ENCODE measurements at regions of chr3 and their contacts with region 1.

Region 1: DNA sequence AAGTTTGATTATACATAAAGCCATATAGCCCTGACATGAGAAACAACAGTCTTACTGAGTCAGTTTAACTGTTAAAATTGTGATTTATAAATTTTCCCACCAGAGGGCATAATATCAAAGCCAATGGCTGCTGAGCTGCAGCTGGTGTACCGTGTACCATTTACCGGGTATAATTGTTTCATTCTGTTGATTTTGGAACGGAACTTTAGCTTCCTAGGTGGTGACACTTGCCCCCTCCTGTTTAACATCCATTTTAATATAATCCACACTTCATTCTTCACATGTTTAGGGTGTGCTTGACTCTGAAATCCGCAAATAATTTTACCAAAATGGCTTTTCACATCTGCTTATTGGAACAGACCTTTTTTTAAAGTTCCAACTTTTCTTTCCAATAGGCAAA is 72.8 kb downstream of the SLC9A9 start:
- DNase-seq: no peak
- H3K4me3 ChIP-seq: no peak overlapping the region
- H3K27ac ChIP-seq: no peak overlapping the region
- H3K4me1 ChIP-seq: no peaks in the 10 kb centered on the region
- H3K27me3 ChIP-seq: no peaks in the 10 kb centered on the region
- CTCF ChIP-seq: peak; percentile 72

Region 2: DNA sequence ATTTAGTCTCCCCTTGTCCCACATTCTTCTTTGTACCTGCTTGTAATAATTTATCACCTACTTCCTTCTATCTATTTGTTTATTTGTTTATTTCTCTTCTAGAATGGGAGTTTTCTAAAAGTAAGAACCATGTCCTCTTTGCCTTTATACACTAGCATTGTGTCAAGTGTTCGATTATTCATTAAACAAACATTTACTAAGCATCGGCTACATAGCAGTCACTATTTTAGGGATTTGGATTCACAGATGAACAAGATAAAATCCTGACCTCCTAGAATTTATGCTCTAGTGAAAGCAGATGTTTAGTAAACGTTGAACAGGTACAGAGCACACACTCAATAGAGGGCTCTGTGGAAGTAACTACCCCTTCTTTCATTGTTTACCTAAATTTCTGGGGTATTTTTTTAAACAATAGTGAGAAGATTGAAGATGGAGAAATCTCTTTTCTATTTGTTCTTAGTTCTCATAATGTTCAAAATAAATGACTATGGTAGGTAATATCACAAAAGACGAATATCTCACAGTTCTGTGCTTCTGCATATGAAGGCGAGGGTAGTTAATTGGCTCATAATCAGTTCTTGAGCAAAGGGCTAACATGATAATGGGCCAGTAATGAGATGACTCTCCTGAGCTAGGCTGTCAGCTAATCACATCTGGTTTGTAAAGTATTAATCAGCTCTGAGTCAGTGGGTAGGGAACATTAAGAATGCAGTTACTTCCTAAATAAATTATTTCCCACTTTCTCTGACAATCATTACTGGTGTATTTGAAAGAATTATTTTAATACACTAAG is 39.1 kb before region 1 on chr3:
- CTCF ChIA-PET with region 1: no interaction called
- POLR2A ChIA-PET with region 1: no interaction called
- intact Hi-C with region 1: no loop called
- DNase-seq: no peak
- H3K4me3 ChIP-seq: no peak overlapping the region
- H3K27ac ChIP-seq: no peak overlapping the region
- H3K4me1 ChIP-seq: no peaks in the 10 kb centered on the region
- H3K27me3 ChIP-seq: no peaks in the 10 kb centered on the region
- CTCF ChIP-seq: no peak

Region 3: DNA sequence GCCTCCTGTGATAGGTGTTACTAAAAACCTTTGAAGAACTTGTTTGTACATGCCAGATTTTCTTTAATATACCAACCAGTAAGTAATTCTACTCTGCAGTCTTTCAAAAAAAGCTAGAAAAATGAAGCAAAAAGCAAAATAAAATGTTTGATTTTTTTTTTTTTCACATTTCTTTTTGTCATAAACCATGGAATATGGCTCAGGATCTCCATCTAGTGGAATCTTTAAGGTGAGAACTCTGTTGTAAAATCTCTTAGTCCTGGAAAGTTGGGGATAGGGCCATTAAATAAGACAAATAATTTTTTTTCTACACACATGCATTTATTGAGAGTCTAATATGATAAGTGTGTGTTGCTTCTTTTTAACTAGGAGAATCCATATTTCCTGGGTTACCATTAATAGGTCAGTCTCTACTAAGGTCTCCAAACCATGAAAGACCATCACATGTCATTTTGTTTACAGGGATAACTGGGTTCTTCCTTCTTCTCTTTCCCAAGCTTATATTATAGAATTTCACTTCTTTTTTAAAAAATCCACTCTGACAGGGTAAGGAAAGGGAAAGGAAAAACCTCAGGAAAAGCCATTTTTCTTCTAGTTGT is 11.8 kb before region 1 on chr3:
- CTCF ChIA-PET with region 1: no interaction called
- POLR2A ChIA-PET with region 1: no interaction called
- intact Hi-C with region 1: no loop called
- DNase-seq: no peak
- H3K4me3 ChIP-seq: no peak overlapping the region
- H3K27ac ChIP-seq: no peak overlapping the region
- H3K4me1 ChIP-seq: no peaks in the 10 kb centered on the region
- H3K27me3 ChIP-seq: no peaks in the 10 kb centered on the region
- CTCF ChIP-seq: peak; percentile 52

Region 4: GRCh38 chr3:143831208-143831607 is 55.7 kb after region 1 on chr3:
- CTCF ChIA-PET with region 1: no interaction called
- POLR2A ChIA-PET with region 1: no interaction called
- intact Hi-C with region 1: no loop called
- DNase-seq: peak; percentile 14 to 63
- H3K4me3 ChIP-seq: no peak overlapping the region; the same call in 1 of the 2 replicates
- H3K27ac ChIP-seq: peak overlapping the region; percentile 67
- H3K4me1 ChIP-seq: peaks cover 35% of the 10 kb centered on the region
- H3K27me3 ChIP-seq: no peaks in the 10 kb centered on the region
- CTCF ChIP-seq: no peak

Region 5: GRCh38 chr3:143885780-143886427 is 110.4 kb after region 1 on chr3:
- CTCF ChIA-PET with region 1: interaction called, 3 read pairs
- POLR2A ChIA-PET with region 1: no interaction called
- intact Hi-C with region 1: loop called (anchors 2 kb)
- DNase-seq: no peak
- H3K4me3 ChIP-seq: no peak overlapping the region
- H3K27ac ChIP-seq: no peak overlapping the region
- H3K4me1 ChIP-seq: no peaks in the 10 kb centered on the region
- H3K27me3 ChIP-seq: no peaks in the 10 kb centered on the region
- CTCF ChIP-seq: peak; percentile 81

Region 6: DNA sequence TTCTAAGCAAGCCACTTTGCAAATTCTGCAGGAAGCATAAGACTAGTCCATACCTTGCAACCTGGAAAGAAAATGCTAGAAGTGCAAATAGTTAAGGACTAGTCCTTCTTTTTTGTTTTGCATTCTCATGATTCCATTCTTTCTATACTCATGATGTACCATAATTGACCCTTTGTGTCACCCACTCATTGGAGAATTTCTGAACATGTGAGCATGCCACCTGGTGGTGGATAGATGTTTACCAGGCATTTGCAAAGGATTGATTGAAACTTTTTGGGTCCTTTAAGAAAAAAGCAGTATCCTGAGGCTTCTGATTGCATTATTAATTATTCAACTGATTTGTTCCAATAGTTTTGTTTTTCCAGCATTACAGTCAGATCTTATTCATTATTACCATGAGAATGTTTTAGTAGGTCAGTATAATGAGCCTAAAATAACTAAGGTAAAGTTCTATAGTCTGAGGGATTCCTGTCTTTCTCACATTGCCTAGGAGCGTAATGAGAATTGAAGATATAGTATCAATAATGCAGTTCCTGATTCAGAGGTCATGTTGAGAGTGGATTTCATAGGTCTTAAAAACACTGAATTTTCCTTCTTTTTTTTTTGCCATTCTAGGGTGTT is 176.0 kb after region 1 on chr3:
- CTCF ChIA-PET with region 1: no interaction called
- POLR2A ChIA-PET with region 1: no interaction called
- intact Hi-C with region 1: loop called (anchors 1 kb)
- DNase-seq: peak in 1 of 2 experiments; percentile 9
- H3K4me3 ChIP-seq: no peak overlapping the region
- H3K27ac ChIP-seq: no peak overlapping the region
- H3K4me1 ChIP-seq: no peaks in the 10 kb centered on the region
- H3K27me3 ChIP-seq: no peaks in the 10 kb centered on the region
- CTCF ChIP-seq: peak; percentile 71

Region 7: GRCh38 chr3:143998266-143998665 is 222.8 kb after region 1 on chr3:
- CTCF ChIA-PET with region 1: no interaction called
- POLR2A ChIA-PET with region 1: interaction called, 13 read pairs
- intact Hi-C with region 1: no loop called
- DNase-seq: no peak
- H3K4me3 ChIP-seq: no peak overlapping the region
- H3K27ac ChIP-seq: no peak overlapping the region
- H3K4me1 ChIP-seq: no peaks in the 10 kb centered on the region
- H3K27me3 ChIP-seq: no peaks in the 10 kb centered on the region
- CTCF ChIP-seq: no peak

Region 8: GRCh38 chr3:144770915-144771351 is 995.5 kb after region 1 on chr3:
- CTCF ChIA-PET with region 1: no interaction called
- POLR2A ChIA-PET with region 1: no interaction called
- intact Hi-C with region 1: loop called (anchors 5 kb)
- DNase-seq: no peak
- H3K4me3 ChIP-seq: no peak overlapping the region
- H3K27ac ChIP-seq: no peak overlapping the region
- H3K4me1 ChIP-seq: no peaks in the 10 kb centered on the region
- H3K27me3 ChIP-seq: no peaks in the 10 kb centered on the region
- CTCF ChIP-seq: peak; percentile 60

Region 9: DNA sequence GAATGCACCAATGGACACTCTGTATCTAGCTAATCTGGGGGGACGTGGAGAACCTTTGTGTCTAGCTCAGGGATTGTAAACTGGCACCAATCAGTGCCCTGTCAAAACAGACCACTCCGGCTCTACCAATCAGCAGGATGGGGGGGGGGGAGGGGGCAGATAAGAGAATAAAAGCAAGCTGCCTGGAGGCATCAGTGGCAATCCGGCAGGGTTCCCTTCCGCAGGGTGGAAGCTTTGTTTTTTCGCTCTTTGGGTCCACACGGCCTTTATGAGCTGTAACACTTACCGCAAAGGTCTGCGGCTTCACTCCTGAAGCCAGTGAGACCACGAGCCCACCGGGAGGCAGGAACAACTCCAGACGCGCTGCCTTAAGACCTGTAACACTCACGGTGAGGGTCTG is 1558.5 kb after region 1 on chr3:
- CTCF ChIA-PET with region 1: no interaction called
- POLR2A ChIA-PET with region 1: no interaction called
- intact Hi-C with region 1: no loop called
- DNase-seq: no peak
- H3K4me3 ChIP-seq: no peak overlapping the region
- H3K27ac ChIP-seq: no peak overlapping the region
- H3K4me1 ChIP-seq: no peaks in the 10 kb centered on the region
- H3K27me3 ChIP-seq: no peaks in the 10 kb centered on the region
- CTCF ChIP-seq: no peak

Region 10: DNA sequence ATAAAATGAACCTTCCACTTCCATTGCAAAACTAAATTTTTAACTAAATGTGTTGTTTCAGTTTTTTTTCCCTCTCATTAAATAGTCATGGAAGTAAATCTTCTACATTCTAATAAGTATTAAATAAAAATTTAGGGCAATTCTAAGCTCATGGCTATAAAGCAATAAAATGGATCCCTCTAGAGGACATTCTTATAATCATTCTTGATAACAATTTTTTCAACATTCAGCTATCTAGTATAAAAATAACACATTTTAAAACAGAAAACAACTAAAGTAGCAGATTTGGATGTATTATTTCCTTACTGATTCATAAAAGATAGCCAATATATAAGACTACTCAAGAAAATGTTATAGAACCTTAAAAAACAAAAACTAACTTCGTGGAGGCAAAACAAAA is 1992.5 kb after region 1 on chr3:
- CTCF ChIA-PET with region 1: no interaction called
- POLR2A ChIA-PET with region 1: no interaction called
- intact Hi-C with region 1: loop called (anchors 5 kb)
- DNase-seq: no peak
- H3K4me3 ChIP-seq: no peak overlapping the region
- H3K27ac ChIP-seq: no peak overlapping the region
- H3K4me1 ChIP-seq: no peaks in the 10 kb centered on the region
- H3K27me3 ChIP-seq: no peaks in the 10 kb centered on the region
- CTCF ChIP-seq: peak; percentile 62